Gastrocnemius medialis (tissue), 4 donors: ENCODE measurements at regions of chr1 and their contacts with region 1.

Region 1: GRCh38 chr1:42766741-42767509 is at the starts of genes C1orf50 and P3H1:
- DNase-seq: peak; percentile 99 to 100
- ATAC-seq: peak; percentile 94 to 96
- H3K4me3 ChIP-seq: peak within 1 kb of the TSS; percentile 75 to 99 (median 94)
- H3K27ac ChIP-seq: peak within 1 kb of the TSS; percentile 92 to 96 (median 95)
- H3K4me1 ChIP-seq: peaks cover 33 to 34% of the 10 kb centered on the region in 2 donors
- H3K27me3 ChIP-seq: no peaks in the 10 kb centered on the region
- CTCF ChIP-seq: no peak
- POLR2A ChIP-seq: peak; percentile 97 to 98
- total RNA-seq, gene C1orf50: 2.8 to 14.7 (median 5.4) TPM
- total RNA-seq, gene P3H1: 3.0 to 7.0 (median 5.6) TPM

Region 2: GRCh38 chr1:42462828-42463763 is 303.8 kb before region 1 on chr1 and contains the start of gene CCDC30:
- in situ Hi-C with region 1: no loop called
- intact Hi-C with region 1: loop called (anchors 2 kb)
- DNase-seq: peak; percentile 94 to 95
- ATAC-seq: peak; percentile 100
- H3K4me3 ChIP-seq: peak within 1 kb of the TSS; percentile 61 to 79 (median 70)
- H3K27ac ChIP-seq: no peak within 1 kb of the TSS
- H3K4me1 ChIP-seq: peaks cover 14 to 16% of the 10 kb centered on the region in 2 donors
- H3K27me3 ChIP-seq: no peaks in the 10 kb centered on the region
- CTCF ChIP-seq: no peak
- POLR2A ChIP-seq: no peak
- total RNA-seq, gene CCDC30: 0.24 to 2.9 (median 0.74) TPM

Region 3: GRCh38 chr1:42681741-42682483 is 85.0 kb before region 1 on chr1 and contains the start of gene YBX1:
- in situ Hi-C with region 1: loop called in 1 of 4 experiments (anchors 10 kb)
- intact Hi-C with region 1: loop called (anchors 5 kb)
- DNase-seq: peak; percentile 98 to 99
- ATAC-seq: peak; percentile 94 to 96
- H3K4me3 ChIP-seq: peak within 1 kb of the TSS; percentile 84 to 92 (median 86)
- H3K27ac ChIP-seq: peak within 1 kb of the TSS; percentile 97 to 98 (median 98)
- H3K4me1 ChIP-seq: peaks cover 43 to 44% of the 10 kb centered on the region in 2 donors
- H3K27me3 ChIP-seq: no peaks in the 10 kb centered on the region
- CTCF ChIP-seq: no peak
- POLR2A ChIP-seq: peak; percentile 89 to 95
- total RNA-seq, gene YBX1: 861 to 1,251 (median 1,022) TPM

Region 4: DNA sequence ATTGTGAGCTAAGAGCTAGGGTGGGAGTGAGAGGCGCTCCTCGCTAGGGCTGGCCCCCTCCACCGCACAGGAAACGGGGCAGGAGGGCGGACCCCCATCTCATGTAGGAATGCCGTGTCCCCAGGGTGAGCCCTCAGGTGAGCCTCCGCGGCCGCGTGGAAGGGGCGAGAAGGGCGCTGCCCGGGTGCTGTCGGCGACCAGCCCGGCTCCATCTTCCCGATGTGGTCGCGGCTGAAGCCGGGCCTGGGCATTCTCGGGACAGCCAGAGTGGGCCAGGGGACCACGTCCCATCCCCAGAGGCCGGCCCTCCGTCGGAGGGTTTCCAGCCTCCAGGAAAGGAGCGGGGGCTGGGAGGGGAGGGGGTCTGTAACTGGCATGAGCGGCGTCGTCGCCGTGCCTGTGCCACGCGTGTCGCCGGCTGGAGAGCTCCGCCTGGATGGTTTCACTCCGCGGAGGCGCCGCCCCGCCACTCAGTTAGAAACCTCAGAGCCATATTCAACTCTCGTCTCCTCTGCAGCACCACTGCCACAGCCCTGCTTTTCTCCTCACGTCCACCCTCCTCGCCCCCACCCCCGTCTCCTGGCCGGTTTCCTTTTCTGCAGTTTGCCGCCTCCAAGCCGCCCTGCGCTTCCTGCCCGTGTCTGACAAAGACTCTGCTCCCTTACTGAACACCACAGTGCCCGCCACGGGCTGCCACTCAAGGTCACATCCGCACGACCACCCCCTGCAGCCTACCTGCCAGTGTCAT is 18.2 kb after region 1 on chr1 and contains the start of gene TMEM269:
- in situ Hi-C with region 1: no loop called
- intact Hi-C with region 1: no loop called
- DNase-seq: no peak
- ATAC-seq: no peak
- H3K4me3 ChIP-seq: peak within 1 kb of the TSS; percentile 36 to 52 (median 48)
- H3K27ac ChIP-seq: no peak within 1 kb of the TSS
- H3K4me1 ChIP-seq: peaks cover 0 to 11% of the 10 kb centered on the region in 2 donors
- H3K27me3 ChIP-seq: peaks cover 0 to 10% (median 0%) of the 10 kb centered on the region in 3 donors
- CTCF ChIP-seq: no peak
- POLR2A ChIP-seq: no peak
- total RNA-seq, gene TMEM269: 0.19 to 0.25 TPM in 2 of 4 donors, not detected in the others

Region 5: GRCh38 chr1:42846257-42847110 is 79.6 kb after region 1 on chr1 and contains the start of gene ZNF691:
- in situ Hi-C with region 1: no loop called
- intact Hi-C with region 1: loop called (anchors 1 kb)
- DNase-seq: peak; percentile 96 to 97
- ATAC-seq: peak; percentile 100
- H3K4me3 ChIP-seq: peak within 1 kb of the TSS; percentile 79 to 99 (median 98)
- H3K27ac ChIP-seq: peak within 1 kb of the TSS; percentile 92 to 96 (median 94)
- H3K4me1 ChIP-seq: peaks cover 18 to 23% of the 10 kb centered on the region in 2 donors
- H3K27me3 ChIP-seq: no peaks in the 10 kb centered on the region
- CTCF ChIP-seq: peak; percentile 11 to 63 (median 23)
- POLR2A ChIP-seq: peak; percentile 65 to 74
- total RNA-seq, gene ZNF691: 7.1 to 25.5 (median 9.8) TPM

Region 6: DNA sequence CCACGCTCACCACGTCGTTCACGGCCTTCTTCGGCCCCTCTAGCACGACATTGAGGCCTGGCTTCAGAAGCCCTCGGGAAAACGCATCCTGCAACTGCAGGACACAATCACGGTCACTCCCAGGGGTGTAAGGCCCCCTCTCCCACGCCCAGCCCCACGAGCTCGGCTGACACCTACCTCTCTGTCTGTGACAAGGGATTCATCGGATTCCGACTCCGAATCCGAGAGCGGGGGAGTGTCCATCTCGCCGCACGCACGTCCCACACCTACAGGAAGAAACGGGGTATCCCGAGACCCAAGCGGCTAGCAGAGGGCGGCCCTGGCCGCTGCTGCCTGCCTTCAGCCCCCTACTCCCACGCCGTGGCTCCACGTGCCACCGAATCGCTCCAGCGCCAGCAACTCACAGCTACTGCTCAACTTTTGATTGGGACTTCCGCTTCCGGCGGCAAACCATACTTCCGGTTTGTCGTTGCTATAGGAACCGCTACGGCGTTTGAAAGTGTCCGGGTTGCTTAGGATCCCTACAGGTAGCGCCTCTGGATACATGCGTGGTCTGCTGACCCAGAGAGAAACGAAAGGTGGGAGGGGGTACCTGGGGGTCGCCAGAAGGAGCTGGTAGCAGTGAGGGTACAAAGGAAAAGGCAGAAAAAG is 405.1 kb after region 1 on chr1 and contains the starts of genes CFAP57 and EBNA1BP2:
- in situ Hi-C with region 1: no loop called
- intact Hi-C with region 1: loop called (anchors 5 kb)
- DNase-seq: peak; percentile 79 to 90
- ATAC-seq: peak; percentile 99 to 100
- H3K4me3 ChIP-seq: peak within 1 kb of the TSS; percentile 85 to 94 (median 92)
- H3K27ac ChIP-seq: peak within 1 kb of the TSS; percentile 50 to 81 (median 74)
- H3K4me1 ChIP-seq: peaks cover 14% of the 10 kb centered on the region in 2 donors
- H3K27me3 ChIP-seq: peaks cover 0 to 8% (median 0%) of the 10 kb centered on the region in 3 donors
- CTCF ChIP-seq: no peak
- POLR2A ChIP-seq: peak in 1 of 2 donors; percentile 29
- total RNA-seq, gene CFAP57: 0.10 to 0.13 TPM in 2 of 4 donors, not detected in the others
- total RNA-seq, gene EBNA1BP2: 41.2 to 68.4 (median 59.1) TPM

Region 7: DNA sequence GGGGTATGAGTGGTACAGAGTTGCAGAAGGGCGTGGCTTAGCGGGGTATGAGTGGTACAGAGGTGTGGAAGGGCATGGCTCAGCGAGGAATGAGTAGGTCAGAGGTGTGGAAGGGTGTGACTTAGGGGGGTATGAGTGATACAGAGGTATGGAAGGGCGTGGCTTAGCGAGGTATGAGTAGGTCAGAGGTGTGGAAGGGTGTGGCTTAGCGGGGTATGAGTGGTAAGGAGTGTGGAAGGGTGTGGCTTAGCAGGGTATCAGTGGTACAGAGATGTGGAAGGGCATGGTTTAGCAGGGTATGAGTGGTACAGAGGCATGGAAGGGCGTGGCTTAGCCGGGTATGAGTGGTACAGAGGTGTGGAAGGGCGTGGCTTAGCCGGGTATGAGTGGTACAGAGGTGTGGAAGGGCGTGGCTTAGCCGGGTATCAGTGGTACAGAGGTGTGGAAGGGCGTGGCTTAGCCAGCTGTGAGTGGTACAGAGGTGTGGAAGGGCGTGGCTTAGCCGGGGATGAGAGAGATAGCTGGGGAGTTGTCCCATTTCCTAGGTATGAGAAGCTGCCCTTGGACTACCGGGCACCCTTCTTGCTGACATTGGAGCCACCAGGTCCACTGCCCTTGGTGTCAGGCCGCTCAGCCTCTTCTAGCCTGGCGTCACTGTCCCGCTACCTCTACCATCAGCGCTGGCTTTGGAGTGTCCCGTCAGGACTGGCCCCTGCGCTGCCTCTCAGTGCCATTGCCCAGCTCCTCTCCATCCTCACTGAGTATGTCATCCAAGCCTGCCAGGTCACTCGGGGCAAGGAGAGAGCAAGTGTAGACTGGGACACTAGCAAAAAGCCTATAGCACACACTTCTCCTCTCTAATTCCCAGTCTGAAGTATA is 657.0 kb after region 1 on chr1:
- in situ Hi-C with region 1: no loop called
- intact Hi-C with region 1: no loop called
- DNase-seq: no peak
- ATAC-seq: no peak
- H3K4me3 ChIP-seq: no peak overlapping the region
- H3K27ac ChIP-seq: no peak overlapping the region
- H3K4me1 ChIP-seq: no peaks in the 10 kb centered on the region
- H3K27me3 ChIP-seq: no peaks in the 10 kb centered on the region
- CTCF ChIP-seq: no peak
- POLR2A ChIP-seq: no peak